Heart right ventricle (tissue), 16 donors: ENCODE measurements at regions of chr17 and their contacts with region 1.

Region 1: GRCh38 chr17:3668279-3669085 is at the starts of genes EMC6 and TAX1BP3:
- DNase-seq: peak; percentile 98 to 99
- ATAC-seq: peak; percentile 88 to 94 (median 93)
- H3K4me3 ChIP-seq: peak within 1 kb of the TSS; percentile 75 to 99 (median 89)
- H3K27ac ChIP-seq: peak within 1 kb of the TSS; percentile 95 to 100 (median 98)
- H3K4me1 ChIP-seq: peaks cover 14 to 59% (median 42%) of the 10 kb centered on the region in 9 donors
- H3K27me3 ChIP-seq: no peaks in the 10 kb centered on the region
- CTCF ChIP-seq: no peak
- total RNA-seq, gene EMC6: 46.0 to 75.0 (median 52.7) TPM
- total RNA-seq, gene TAX1BP3: 147 to 206 (median 176) TPM

Region 2: GRCh38 chr17:3535253-3535995 is 133.1 kb before region 1 on chr17:
- intact Hi-C with region 1: loop called in 1 of 10 experiments (anchors 10 kb)
- DNase-seq: peak; percentile 44 to 73
- ATAC-seq: peak; percentile 65 to 85 (median 76)
- H3K4me3 ChIP-seq: peak overlapping the region in 9 of 10 donors; percentile 10 to 55 (median 46)
- H3K27ac ChIP-seq: peak overlapping the region in 7 of 10 donors; percentile 40 to 70 (median 59)
- H3K4me1 ChIP-seq: peaks cover 0 to 18% (median 11%) of the 10 kb centered on the region in 9 donors
- H3K27me3 ChIP-seq: peaks cover 0 to 5% (median 0%) of the 10 kb centered on the region in 7 donors
- CTCF ChIP-seq: peak; percentile 27 to 80 (median 68)

Region 3: DNA sequence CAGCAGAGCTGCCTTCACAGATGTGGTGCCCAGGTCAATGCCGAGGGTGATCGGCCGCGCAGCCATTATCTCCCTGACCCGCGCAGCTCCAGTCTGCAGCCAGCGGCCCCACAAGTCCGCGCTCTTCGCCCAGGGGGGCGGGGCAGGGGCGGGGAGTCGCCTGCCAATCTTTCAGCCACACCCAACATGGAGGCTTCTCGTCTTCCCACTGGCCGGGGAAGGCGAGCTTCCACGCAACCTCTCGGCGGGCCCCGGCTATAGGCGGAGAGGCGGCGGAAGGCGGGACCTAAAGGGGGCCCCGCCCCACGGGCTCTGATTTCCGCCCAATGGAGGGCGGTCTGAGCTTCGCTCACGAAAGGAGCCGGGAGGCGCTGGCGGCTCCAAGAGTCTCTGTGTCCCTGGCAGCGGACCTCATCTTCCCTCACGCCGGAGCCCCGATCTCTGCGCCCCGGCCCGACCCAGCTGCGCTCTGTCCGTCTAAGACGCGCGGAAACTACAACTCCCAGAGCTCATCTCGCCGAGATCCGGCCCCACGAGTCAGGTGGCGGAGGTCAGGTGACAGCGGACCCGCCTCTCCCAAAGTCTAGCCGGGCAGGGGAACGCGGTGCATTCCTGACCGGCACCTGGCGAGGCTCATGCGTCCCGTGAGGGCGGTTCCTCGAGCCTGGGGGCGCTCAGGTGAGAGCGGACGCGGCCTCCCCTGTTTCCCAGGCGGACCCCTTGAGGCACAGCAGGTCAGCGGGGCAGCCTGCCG is 32.2 kb before region 1 on chr17 and contains the starts of genes CTNS and SHPK:
- intact Hi-C with region 1: loop called in 2 of 10 experiments (anchors 1 to 2 kb)
- DNase-seq: peak; percentile 97
- ATAC-seq: peak; percentile 97 to 99 (median 98)
- H3K4me3 ChIP-seq: peak within 1 kb of the TSS; percentile 74 to 99 (median 90)
- H3K27ac ChIP-seq: peak within 1 kb of the TSS; percentile 92 to 100 (median 97)
- H3K4me1 ChIP-seq: peaks cover 0 to 61% (median 44%) of the 10 kb centered on the region in 9 donors
- H3K27me3 ChIP-seq: no peaks in the 10 kb centered on the region
- CTCF ChIP-seq: peak in 3 of 9 donors; percentile 5 to 25 (median 9)
- total RNA-seq, gene CTNS: 5.2 to 11.8 (median 8.0) TPM
- total RNA-seq, gene SHPK: 2.6 to 5.8 (median 4.2) TPM